ENCODE measurements at regions of chr13 and their contacts with region 1.

Region 1: GRCh38 chr13:99436686-99437416 is 64.4 kb upstream of the TM9SF2 start:
- DNase-seq: peak; percentile 92 to 95 (median 94)
- H3K4me3 ChIP-seq: peak overlapping the region in 1 of 2 donors; percentile 15
- H3K4me3 Mint-ChIP-seq: peak overlapping the region; percentile 19 to 85 (median 52)
- H3K27ac ChIP-seq: no peak overlapping the region
- H3K27ac Mint-ChIP-seq: peak overlapping the region; percentile 48 to 100 (median 90)
- H3K4me1 ChIP-seq: peaks cover 57% of the 10 kb centered on the region
- H3K4me1 Mint-ChIP-seq: peaks cover 40 to 58% (median 51%) of the 10 kb centered on the region in 4 donors
- H3K27me3 ChIP-seq: no peaks in the 10 kb centered on the region
- H3K27me3 Mint-ChIP-seq: peaks cover 0 to 3% of the 10 kb centered on the region in 2 donors

Region 2: DNA sequence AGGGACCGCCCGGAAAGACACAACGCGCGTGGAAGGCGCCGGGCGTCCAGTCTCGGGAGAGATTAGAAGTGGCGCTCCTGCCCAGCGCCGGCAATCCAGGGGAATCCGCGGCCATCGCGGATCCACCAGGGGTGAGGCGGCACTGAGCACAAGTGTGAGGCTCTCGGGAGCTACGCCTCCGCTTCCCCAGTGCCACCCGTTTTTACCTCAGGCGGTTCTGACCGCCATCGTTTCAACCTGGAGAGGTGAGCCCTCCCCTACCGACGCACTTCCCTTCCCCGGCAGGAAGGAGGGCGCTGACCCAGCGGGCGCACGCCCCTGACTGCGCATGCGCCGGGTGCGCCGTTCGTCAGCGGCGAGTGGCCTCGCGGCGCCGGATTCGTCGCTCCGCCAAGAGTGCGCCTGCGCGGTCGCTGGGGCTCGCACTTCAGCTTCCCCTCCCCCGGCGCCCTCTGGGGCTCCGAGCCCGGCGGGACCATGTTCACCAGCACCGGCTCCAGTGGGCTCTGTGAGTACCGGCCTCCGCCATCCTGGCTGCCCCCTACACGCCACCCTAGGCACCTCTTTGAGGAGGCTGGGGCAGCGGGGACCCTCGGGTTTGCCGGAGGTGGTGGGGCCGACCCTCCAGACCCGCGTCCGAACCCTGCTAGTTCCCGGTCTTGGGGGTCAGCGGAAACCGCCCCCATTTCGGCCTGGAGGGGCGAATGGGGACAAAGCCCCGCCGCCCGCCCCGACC is 236.3 kb before region 1 on chr13 and contains the start of gene UBAC2:
- CTCF ChIA-PET with region 1: interaction called, 3 read pairs
- POLR2A ChIA-PET with region 1: interaction called, 4 read pairs
- intact Hi-C with region 1: loop called (anchors 2 kb)
- DNase-seq: peak; percentile 95 to 99 (median 98)
- H3K4me3 ChIP-seq: peak within 1 kb of the TSS; percentile 79 to 89
- H3K4me3 Mint-ChIP-seq: peak within 1 kb of the TSS; percentile 93 to 100 (median 99)
- H3K27ac ChIP-seq: peak within 1 kb of the TSS; percentile 97
- H3K27ac Mint-ChIP-seq: peak within 1 kb of the TSS; percentile 85 to 98 (median 97)
- H3K4me1 ChIP-seq: peaks cover 61% of the 10 kb centered on the region
- H3K4me1 Mint-ChIP-seq: peaks cover 45 to 69% (median 55%) of the 10 kb centered on the region in 4 donors
- H3K27me3 ChIP-seq: no peaks in the 10 kb centered on the region
- H3K27me3 Mint-ChIP-seq: no peaks in the 10 kb centered on the region
- total RNA-seq, gene UBAC2: 88.4 to 89.0 TPM

Region 3: DNA sequence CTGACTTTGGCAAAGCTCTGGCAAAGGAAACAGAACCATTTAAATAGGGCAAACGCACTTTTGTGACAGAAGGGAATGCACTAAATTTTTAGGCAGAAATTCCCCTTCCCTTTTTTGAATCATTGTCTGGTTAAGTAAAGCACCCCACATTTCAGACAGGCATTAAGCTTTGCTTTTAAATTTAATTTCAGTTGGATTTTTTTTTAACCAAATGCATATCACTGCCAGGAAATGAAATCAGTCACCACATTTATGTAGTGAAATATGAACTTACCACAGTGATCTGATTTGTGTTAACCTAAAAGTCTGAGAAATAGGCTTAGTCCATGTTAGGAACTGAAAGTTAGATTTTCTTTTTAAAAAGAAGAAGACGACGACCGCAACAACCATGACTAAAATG is 140.5 kb before region 1 on chr13:
- CTCF ChIA-PET with region 1: interaction called, 128 read pairs
- POLR2A ChIA-PET with region 1: interaction called, 152 read pairs
- intact Hi-C with region 1: no loop called
- DNase-seq: peak; percentile 46 to 69 (median 59)
- H3K4me3 ChIP-seq: peak overlapping the region in 1 of 2 donors; percentile 8
- H3K4me3 Mint-ChIP-seq: peak overlapping the region; percentile 76 to 87 (median 86)
- H3K27ac ChIP-seq: peak overlapping the region; percentile 66
- H3K27ac Mint-ChIP-seq: peak overlapping the region; percentile 86 to 96 (median 94)
- H3K4me1 ChIP-seq: peaks cover 94% of the 10 kb centered on the region
- H3K4me1 Mint-ChIP-seq: peaks cover 58 to 92% (median 70%) of the 10 kb centered on the region in 4 donors
- H3K27me3 ChIP-seq: no peaks in the 10 kb centered on the region
- H3K27me3 Mint-ChIP-seq: no peaks in the 10 kb centered on the region

Region 4: GRCh38 chr13:99356158-99357091 is 80.4 kb before region 1 on chr13:
- CTCF ChIA-PET with region 1: interaction called, 66 read pairs
- POLR2A ChIA-PET with region 1: interaction called, 34 read pairs
- intact Hi-C with region 1: loop called (anchors 1 kb)
- DNase-seq: peak; percentile 88 to 95 (median 92)
- H3K4me3 ChIP-seq: peak overlapping the region; percentile 13 to 37
- H3K4me3 Mint-ChIP-seq: peak overlapping the region; percentile 30 to 82 (median 73)
- H3K27ac ChIP-seq: peak overlapping the region; percentile 94
- H3K27ac Mint-ChIP-seq: peak overlapping the region; percentile 96 to 100 (median 99)
- H3K4me1 ChIP-seq: peaks cover 98% of the 10 kb centered on the region
- H3K4me1 Mint-ChIP-seq: peaks cover 90 to 100% (median 96%) of the 10 kb centered on the region in 4 donors
- H3K27me3 ChIP-seq: no peaks in the 10 kb centered on the region
- H3K27me3 Mint-ChIP-seq: no peaks in the 10 kb centered on the region

Region 5: GRCh38 chr13:99386911-99387788 is 49.7 kb before region 1 on chr13:
- CTCF ChIA-PET with region 1: interaction called, 253 read pairs
- POLR2A ChIA-PET with region 1: interaction called, 63 read pairs
- intact Hi-C with region 1: loop called (anchors 1 kb)
- DNase-seq: peak; percentile 78 to 84 (median 81)
- H3K4me3 ChIP-seq: no peak overlapping the region
- H3K4me3 Mint-ChIP-seq: peak overlapping the region; percentile 4 to 73 (median 54)
- H3K27ac ChIP-seq: peak overlapping the region; percentile 30
- H3K27ac Mint-ChIP-seq: peak overlapping the region; percentile 92 to 99 (median 96)
- H3K4me1 ChIP-seq: peaks cover 65% of the 10 kb centered on the region
- H3K4me1 Mint-ChIP-seq: peaks cover 46 to 70% (median 60%) of the 10 kb centered on the region in 4 donors
- H3K27me3 ChIP-seq: no peaks in the 10 kb centered on the region
- H3K27me3 Mint-ChIP-seq: no peaks in the 10 kb centered on the region

Region 6: DNA sequence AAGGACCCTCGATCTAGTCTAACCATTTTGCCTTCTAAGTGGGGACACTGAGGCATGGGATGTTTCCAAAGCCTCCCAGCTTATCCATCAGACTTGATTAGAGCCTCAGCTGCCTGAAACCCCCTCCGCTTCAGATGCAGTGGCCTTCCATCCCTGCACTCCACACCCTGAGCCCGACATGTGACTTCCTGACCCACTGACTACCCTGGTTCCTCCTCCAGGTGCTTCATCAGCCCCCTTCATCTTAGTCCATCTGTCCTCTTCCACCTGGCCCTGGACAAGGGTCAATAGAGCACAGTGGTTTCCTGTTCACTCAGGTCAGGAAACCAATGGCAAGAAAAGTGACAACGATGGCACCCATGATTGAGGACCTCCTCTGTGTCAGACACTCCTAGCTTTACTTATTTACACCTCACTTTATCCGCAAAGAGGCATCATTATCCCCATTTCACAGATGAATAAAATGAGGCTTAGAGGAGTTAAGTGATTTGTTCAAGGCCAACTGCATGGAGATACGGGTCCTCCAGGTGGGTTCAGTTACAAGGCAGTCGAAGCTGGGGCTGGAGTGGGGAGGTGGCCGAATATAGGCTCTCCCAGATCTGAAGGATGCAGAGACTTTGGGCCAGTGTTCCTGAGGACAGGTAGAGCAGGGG is 17.1 kb before region 1 on chr13:
- CTCF ChIA-PET with region 1: interaction called, 122 read pairs
- POLR2A ChIA-PET with region 1: interaction called, 15 read pairs
- intact Hi-C with region 1: loop called (anchors 1 kb)
- DNase-seq: no peak
- H3K4me3 ChIP-seq: peak overlapping the region in 1 of 2 donors; percentile 27
- H3K4me3 Mint-ChIP-seq: peak overlapping the region; percentile 78 to 96 (median 86)
- H3K27ac ChIP-seq: peak overlapping the region; percentile 41
- H3K27ac Mint-ChIP-seq: peak overlapping the region; percentile 89 to 97 (median 93)
- H3K4me1 ChIP-seq: peaks cover 46% of the 10 kb centered on the region
- H3K4me1 Mint-ChIP-seq: peaks cover 27 to 58% (median 40%) of the 10 kb centered on the region in 4 donors
- H3K27me3 ChIP-seq: no peaks in the 10 kb centered on the region
- H3K27me3 Mint-ChIP-seq: no peaks in the 10 kb centered on the region

Measured in CD4-positive, alpha-beta memory T cell (primary cell).